BJ (cell line): ENCODE measurements at regions of chr3 and their contacts with region 1.

Region 1: DNA sequence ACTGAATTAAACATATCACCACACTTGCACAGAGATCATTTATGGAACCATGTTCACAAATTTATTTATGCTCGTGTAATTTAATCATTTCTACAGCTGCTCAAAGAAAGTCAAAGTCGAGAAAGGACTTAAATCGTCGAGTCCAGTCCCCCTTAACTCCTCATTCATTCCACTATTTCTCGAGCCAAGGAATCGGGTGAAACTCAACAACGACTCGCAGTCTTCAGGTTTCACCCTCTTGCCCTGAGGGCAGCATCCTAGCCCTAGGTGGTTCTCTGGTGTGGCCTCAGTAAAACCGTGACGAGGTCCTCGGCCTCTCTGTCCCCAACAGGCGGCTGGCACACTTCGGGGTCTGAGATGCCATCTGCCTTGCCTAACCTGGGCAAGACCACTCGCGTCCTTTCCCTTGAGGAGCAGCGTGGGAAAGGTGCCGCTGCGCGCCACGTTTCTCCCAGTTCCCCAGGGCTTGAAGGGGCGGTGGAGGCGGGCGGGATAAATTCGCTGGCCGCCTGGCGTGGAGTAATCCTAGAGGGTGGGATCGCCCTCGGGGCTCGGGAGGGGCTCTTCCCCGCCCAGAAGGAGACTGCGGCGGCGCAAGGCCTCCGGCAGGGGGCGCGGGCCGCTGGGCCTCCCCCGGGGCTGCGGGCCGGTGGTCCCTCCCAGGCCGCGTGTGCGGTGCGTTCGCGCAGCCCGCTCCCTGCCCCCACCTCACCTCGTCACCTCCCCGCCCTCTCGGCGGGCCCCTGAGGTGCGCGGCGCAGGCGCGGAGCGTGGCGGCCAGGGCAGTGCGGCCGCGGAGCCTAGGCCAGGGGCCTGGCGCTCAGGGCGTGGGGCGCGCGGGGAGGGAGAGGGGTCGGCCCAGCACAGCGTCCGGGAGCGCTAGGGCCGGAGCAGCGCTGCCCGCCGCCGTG is at the start of gene ZNF639:
- DNase-seq: no peak
- H3K4me3 ChIP-seq: peak within 1 kb of the TSS; percentile 94
- H3K27me3 ChIP-seq: no peaks in the 10 kb centered on the region
- CTCF ChIP-seq: peak; percentile 61
- polyA plus RNA-seq, gene ZNF639: 9.6 and 13.8 TPM in 2 replicates

Region 2: GRCh38 chr3:179015551-179016020 is 307.0 kb before region 1 on chr3:
- CTCF ChIA-PET with region 1: interaction called, 29 read pairs
- POLR2A ChIA-PET with region 1: no interaction called
- DNase-seq: peak; percentile 40
- H3K4me3 ChIP-seq: no peak overlapping the region
- H3K27me3 ChIP-seq: no peaks in the 10 kb centered on the region
- CTCF ChIP-seq: peak; percentile 79

Region 3: DNA sequence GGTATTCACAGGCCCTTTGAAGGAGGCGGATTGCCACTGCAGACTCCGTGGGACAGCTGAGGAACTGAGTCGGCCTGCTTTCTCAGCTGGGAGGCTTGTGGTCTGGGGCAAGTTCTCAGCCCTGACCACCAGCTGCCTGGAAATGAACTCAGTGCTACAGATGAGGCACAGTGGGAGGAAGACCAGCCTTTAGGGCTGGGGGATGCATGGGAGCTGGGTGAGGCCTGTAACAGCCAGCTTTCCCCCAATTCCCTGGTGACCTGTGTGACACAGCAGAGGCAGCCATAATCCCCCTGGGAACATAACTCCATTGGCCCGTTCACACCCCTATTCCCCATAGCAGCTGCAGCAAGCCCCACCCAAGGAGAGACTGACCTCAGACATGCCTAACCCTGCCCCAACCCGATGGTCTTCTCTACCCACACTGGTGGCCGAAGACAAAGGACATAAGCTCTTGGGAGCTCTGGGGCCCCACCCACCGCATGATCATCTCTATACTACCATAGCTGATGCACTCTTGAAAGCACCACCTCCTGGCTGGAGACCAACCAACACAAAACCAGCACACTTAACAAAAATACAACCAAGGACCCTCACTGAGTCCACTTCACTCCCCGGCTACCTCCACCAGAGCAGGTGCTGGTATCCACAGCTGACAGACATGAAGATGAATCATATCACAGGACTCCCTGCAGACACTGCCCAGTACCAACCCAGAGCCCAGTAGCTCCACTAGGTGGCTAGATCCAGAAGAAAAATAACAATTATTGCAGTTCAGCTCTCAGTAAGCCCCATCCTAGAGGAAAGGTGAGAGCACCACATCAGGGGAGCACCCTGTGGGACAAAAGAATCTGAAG is 275.8 kb before region 1 on chr3:
- CTCF ChIA-PET with region 1: interaction called, 11 read pairs
- POLR2A ChIA-PET with region 1: no interaction called
- DNase-seq: no peak
- H3K4me3 ChIP-seq: no peak overlapping the region
- H3K27me3 ChIP-seq: no peaks in the 10 kb centered on the region
- CTCF ChIP-seq: no peak

Region 4: DNA sequence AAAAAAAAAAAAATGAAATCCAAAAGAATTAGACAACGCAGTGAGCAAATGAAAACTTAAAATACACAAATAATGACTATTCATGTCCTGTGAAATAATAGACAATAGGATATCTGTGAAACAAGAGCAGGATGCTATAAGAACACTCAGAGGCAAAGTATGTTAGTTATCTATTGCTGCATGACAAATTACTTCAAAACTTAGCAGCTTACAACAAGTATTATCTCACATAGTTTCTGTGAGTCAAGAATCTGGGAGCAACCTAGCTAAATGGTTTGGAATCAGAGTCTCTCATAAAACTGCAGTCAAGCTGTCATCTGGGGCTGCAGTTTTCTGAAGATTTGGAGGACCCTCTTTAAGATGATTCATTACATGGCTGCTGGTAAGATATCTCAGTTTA is 214.5 kb before region 1 on chr3:
- CTCF ChIA-PET with region 1: interaction called, 25 read pairs
- POLR2A ChIA-PET with region 1: no interaction called
- DNase-seq: no peak
- H3K4me3 ChIP-seq: no peak overlapping the region
- H3K27me3 ChIP-seq: no peaks in the 10 kb centered on the region
- CTCF ChIP-seq: no peak

Region 5: GRCh38 chr3:179147873-179148615 is 174.5 kb before region 1 on chr3 and contains the start of gene PIK3CA:
- CTCF ChIA-PET with region 1: interaction called, 28 read pairs
- POLR2A ChIA-PET with region 1: no interaction called
- DNase-seq: peak; percentile 93
- H3K4me3 ChIP-seq: peak within 1 kb of the TSS; percentile 92
- H3K27me3 ChIP-seq: no peaks in the 10 kb centered on the region
- CTCF ChIP-seq: no peak
- polyA plus RNA-seq, gene PIK3CA: 5.5 and 13.2 TPM in 2 replicates

Region 6: GRCh38 chr3:179292450-179292849 is 30.1 kb before region 1 on chr3:
- CTCF ChIA-PET with region 1: no interaction called
- POLR2A ChIA-PET with region 1: no interaction called
- DNase-seq: no peak
- H3K4me3 ChIP-seq: no peak overlapping the region
- H3K27me3 ChIP-seq: no peaks in the 10 kb centered on the region
- CTCF ChIP-seq: no peak

Region 7: DNA sequence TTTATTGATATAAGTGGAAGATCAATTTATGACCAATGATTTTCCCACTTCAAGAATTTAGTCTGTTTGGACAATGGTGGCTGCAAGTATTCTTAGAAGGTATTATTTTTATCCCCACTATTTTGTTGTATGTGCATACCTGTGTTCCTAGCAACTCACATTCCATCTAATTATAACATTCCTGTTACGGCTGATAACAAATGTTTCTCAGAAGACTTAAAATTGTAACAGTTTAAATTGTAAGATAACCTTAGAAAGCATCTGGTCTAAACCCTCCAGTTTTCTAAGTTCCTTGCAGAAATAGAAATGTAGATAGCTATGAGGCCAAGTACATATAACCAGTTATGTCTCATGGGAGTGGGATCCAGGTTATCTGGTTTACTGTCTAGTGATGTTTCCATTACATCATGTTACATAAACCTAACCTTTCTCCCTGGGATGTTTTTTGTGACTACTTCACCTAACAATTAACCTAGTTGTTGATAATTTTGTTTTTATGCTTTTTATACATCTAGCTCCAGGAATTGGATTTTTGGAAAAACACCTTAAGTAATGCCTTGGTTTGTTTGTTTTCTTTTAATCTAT is 13.9 kb after region 1 on chr3:
- CTCF ChIA-PET with region 1: interaction called, 6 read pairs
- POLR2A ChIA-PET with region 1: interaction called, 18 read pairs
- DNase-seq: no peak
- H3K4me3 ChIP-seq: no peak overlapping the region
- H3K27me3 ChIP-seq: no peaks in the 10 kb centered on the region
- CTCF ChIP-seq: no peak

Region 8: GRCh38 chr3:179558742-179559364 is 236.3 kb after region 1 on chr3:
- CTCF ChIA-PET with region 1: interaction called, 10 read pairs
- POLR2A ChIA-PET with region 1: no interaction called
- DNase-seq: no peak
- H3K4me3 ChIP-seq: no peak overlapping the region
- H3K27me3 ChIP-seq: no peaks in the 10 kb centered on the region
- CTCF ChIP-seq: peak; percentile 82